Body of pancreas (tissue), 4 donors: ENCODE measurements at regions of chr14 and their contacts with region 1.

Region 1: GRCh38 chr14:75307700-75308379 is 29.2 kb downstream of the FOS start:
- DNase-seq: peak; percentile 87 to 92 (median 90)
- ATAC-seq: peak; percentile 68
- H3K4me3 ChIP-seq: no peak overlapping the region
- H3K27ac ChIP-seq: no peak overlapping the region
- H3K4me1 ChIP-seq: peaks cover 16% of the 10 kb centered on the region
- H3K27me3 ChIP-seq: no peaks in the 10 kb centered on the region
- CTCF ChIP-seq: peak; percentile 87 to 94 (median 91)
- POLR2A ChIP-seq: no peak

Region 2: GRCh38 chr14:74945823-74946682 is 361.8 kb before region 1 on chr14:
- intact Hi-C with region 1: loop called (anchors 10 kb)
- DNase-seq: peak; percentile 74 to 81 (median 78)
- ATAC-seq: peak; percentile 80
- H3K4me3 ChIP-seq: no peak overlapping the region
- H3K27ac ChIP-seq: no peak overlapping the region
- H3K4me1 ChIP-seq: peaks cover 17% of the 10 kb centered on the region
- H3K27me3 ChIP-seq: no peaks in the 10 kb centered on the region
- CTCF ChIP-seq: peak; percentile 75 to 96 (median 87)
- POLR2A ChIP-seq: no peak

Region 3: DNA sequence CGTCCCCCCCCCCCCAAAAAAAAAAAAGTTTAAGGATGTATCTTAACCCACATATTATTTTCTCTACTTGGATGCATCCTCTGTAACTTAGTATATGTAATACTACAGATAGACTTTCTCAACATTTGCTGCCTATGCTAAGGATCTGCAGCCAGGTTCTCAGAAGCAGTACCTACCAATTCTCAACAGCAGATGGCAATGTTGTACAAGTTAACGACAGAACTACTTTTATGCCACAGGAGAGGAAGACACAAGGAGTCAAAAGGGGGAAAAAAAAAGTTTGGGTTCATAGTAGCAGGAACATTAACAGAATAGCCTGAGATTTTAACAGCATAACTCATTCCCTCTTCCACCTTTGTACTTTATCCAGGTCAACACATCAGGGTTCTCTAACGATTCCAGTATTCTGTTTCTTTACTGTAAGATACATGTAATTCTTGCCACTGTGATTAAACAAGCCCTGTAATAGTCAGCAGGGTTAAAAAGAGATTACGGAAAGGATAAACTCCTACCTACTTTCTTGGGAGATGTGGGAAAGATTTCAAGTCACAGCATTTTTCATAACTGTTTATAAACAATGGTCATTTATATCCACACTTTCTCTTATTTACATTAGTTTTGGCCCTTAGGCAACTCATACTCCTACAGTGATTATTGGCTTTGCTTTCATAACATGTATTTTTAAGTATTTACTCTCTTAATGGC is 175.3 kb before region 1 on chr14:
- intact Hi-C with region 1: loop called (anchors 5 kb)
- DNase-seq: peak; percentile 54 to 82 (median 60)
- ATAC-seq: peak; percentile 84
- H3K4me3 ChIP-seq: no peak overlapping the region
- H3K27ac ChIP-seq: peak overlapping the region in 2 of 4 donors; percentile 34 to 43
- H3K4me1 ChIP-seq: peaks cover 33% of the 10 kb centered on the region
- H3K27me3 ChIP-seq: no peaks in the 10 kb centered on the region
- CTCF ChIP-seq: peak; percentile 27 to 92 (median 84)
- POLR2A ChIP-seq: no peak

Region 4: DNA sequence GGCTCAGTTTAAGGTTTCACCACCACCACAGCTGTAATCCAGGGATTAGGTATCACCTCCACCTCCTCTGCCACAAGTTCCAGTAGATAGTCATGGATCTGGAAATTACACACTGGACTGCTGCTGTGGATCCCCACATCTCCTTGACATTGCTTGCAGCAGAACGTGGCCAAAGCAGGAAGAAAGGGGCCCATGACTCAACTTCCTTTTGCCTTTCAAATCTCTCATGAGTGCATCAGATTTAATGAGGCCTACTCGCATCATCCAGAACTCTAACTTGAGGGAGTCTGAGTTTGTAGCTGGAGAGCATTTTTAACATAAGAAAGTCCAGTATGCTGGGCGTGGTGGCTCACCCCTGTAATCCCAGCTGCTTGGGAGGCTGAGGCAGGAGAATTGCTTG is 102.2 kb before region 1 on chr14:
- intact Hi-C with region 1: no loop called
- DNase-seq: no peak
- ATAC-seq: no peak
- H3K4me3 ChIP-seq: no peak overlapping the region
- H3K27ac ChIP-seq: no peak overlapping the region
- H3K4me1 ChIP-seq: peaks cover 15% of the 10 kb centered on the region
- H3K27me3 ChIP-seq: no peaks in the 10 kb centered on the region
- CTCF ChIP-seq: no peak
- POLR2A ChIP-seq: no peak

Region 5: DNA sequence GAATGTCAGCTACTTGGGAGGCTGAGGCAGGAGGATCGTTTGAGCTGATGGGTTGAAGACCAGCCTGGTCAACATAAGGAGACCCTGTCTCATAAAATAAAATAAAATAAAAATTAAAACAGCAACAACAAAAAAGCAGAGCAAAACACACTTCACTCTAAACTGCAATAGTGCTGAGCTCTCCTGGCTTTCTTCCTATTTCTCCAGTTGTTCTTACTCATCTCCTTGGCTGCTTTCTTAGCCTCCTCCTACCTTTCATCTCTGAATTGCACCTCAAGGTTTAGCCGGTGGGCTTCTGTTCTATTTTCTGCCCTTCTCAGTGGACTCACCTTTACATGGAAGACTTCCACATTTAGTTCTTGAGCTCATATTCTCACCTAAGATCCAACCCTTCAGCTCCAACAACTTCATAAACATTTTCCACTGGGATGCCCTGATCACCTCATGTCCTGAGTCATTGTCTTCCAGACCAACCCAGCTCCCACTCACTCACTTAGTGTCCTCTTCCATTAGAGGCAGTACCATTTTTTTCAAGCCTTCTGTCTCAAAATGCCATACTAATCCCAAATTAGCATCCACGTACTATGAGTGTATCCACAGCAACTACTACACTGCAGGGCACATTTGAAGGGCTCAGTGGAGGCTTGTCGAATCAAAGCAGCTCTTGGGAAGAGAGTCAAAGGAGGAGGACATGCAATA is 90.2 kb before region 1 on chr14:
- intact Hi-C with region 1: no loop called
- DNase-seq: no peak
- ATAC-seq: no peak
- H3K4me3 ChIP-seq: no peak overlapping the region
- H3K27ac ChIP-seq: no peak overlapping the region
- H3K4me1 ChIP-seq: no peaks in the 10 kb centered on the region
- H3K27me3 ChIP-seq: no peaks in the 10 kb centered on the region
- CTCF ChIP-seq: no peak
- POLR2A ChIP-seq: no peak

Region 6: GRCh38 chr14:75418849-75419768 is 111.3 kb after region 1 on chr14:
- intact Hi-C with region 1: loop called (anchors 10 kb)
- DNase-seq: peak; percentile 50 to 70 (median 62)
- ATAC-seq: peak; percentile 73
- H3K4me3 ChIP-seq: no peak overlapping the region
- H3K27ac ChIP-seq: no peak overlapping the region
- H3K4me1 ChIP-seq: peaks cover 14% of the 10 kb centered on the region
- H3K27me3 ChIP-seq: no peaks in the 10 kb centered on the region
- CTCF ChIP-seq: no peak
- POLR2A ChIP-seq: no peak

Region 7: GRCh38 chr14:75476274-75476995 is 168.6 kb after region 1 on chr14:
- intact Hi-C with region 1: no loop called
- DNase-seq: peak in 1 of 4 donors; percentile 22
- ATAC-seq: no peak
- H3K4me3 ChIP-seq: no peak overlapping the region
- H3K27ac ChIP-seq: no peak overlapping the region
- H3K4me1 ChIP-seq: peaks cover 3% of the 10 kb centered on the region
- H3K27me3 ChIP-seq: no peaks in the 10 kb centered on the region
- CTCF ChIP-seq: peak in 1 of 7 experiments; percentile 4
- POLR2A ChIP-seq: no peak

Region 8: DNA sequence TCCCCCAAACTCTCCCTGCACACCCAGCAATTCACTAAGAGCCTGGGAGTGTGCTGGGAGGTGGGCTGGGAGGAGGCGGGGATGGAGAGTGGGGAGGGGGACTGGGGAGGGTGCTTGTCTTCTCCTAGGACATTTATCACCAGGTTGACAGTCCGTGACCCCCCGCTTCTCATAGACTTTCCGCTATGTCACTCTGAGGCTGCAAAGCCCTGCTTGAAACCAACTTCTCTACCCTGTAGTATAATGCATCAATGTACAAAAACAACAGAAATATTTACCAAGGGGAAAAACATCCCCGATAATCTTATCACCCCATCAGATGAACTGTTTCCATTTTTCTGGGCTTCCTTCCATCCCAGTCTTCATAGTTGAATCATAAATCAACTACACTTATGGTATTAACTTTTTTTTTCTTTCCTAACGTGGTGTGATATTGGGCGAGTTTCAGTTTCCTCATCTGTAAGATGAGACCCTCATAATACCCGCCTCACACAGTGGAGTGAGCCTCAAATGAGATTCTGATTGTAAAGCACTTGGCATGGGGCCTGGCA is 185.8 kb after region 1 on chr14:
- intact Hi-C with region 1: loop called (anchors 5 kb)
- DNase-seq: no peak
- ATAC-seq: no peak
- H3K4me3 ChIP-seq: no peak overlapping the region
- H3K27ac ChIP-seq: no peak overlapping the region
- H3K4me1 ChIP-seq: peaks cover 11% of the 10 kb centered on the region
- H3K27me3 ChIP-seq: no peaks in the 10 kb centered on the region
- CTCF ChIP-seq: no peak
- POLR2A ChIP-seq: no peak

Region 9: DNA sequence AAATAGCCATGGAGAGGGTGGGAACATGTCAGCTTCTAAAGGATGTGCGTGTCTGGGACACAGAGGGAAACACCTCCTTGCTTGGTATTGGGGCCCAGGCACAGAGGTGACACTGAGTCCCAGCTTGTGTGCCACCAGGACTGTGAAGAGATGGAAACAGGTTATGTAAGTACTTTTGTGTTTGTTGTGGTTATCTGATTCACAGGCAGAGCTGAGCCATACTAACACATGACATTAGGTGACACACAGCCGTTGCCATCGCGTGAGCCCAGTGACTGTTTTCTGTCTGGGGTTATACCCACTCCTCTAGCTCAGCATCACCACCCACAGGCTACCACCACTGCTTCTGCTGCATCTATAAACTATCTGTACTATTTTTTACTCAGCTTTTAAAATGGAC is 258.5 kb after region 1 on chr14:
- intact Hi-C with region 1: loop called (anchors 5 kb)
- DNase-seq: no peak
- ATAC-seq: no peak
- H3K4me3 ChIP-seq: no peak overlapping the region
- H3K27ac ChIP-seq: no peak overlapping the region
- H3K4me1 ChIP-seq: no peaks in the 10 kb centered on the region
- H3K27me3 ChIP-seq: no peaks in the 10 kb centered on the region
- CTCF ChIP-seq: no peak
- POLR2A ChIP-seq: no peak

Region 10: DNA sequence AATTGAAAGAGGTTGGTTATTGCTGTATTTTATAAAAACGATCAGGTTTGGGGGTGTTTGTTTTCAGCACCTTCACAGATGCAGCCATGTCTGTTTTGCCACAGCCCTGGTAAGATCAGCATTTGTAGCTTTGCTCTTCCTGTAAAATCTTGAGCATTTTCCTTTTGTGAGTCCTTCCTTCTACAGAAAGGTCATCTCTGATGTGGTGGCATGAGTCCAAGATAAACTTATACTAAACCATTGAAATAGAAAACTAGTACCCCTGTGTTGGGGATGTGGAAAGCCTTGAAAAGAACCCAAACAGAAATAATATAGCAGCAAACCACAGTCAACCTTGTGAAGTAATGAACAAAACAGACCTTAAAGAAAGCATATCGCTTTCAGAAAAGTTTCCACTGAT is 588.5 kb after region 1 on chr14:
- intact Hi-C with region 1: no loop called
- DNase-seq: no peak
- ATAC-seq: no peak
- H3K4me3 ChIP-seq: no peak overlapping the region
- H3K27ac ChIP-seq: no peak overlapping the region
- H3K4me1 ChIP-seq: no peaks in the 10 kb centered on the region
- H3K27me3 ChIP-seq: no peaks in the 10 kb centered on the region
- CTCF ChIP-seq: no peak
- POLR2A ChIP-seq: no peak